HCT116 (cell line): ENCODE measurements at regions of chr14 and their contacts with region 1.

Region 1: GRCh38 chr14:80850197-80850814 is 91.2 kb downstream of the CEP128 start:
- DNase-seq: peak; percentile 21
- ATAC-seq: peak; percentile 58
- H3K4me3 ChIP-seq: no peak overlapping the region
- H3K27ac ChIP-seq: no peak overlapping the region
- H3K4me1 ChIP-seq: no peaks in the 10 kb centered on the region
- H3K27me3 ChIP-seq: no peaks in the 10 kb centered on the region
- CTCF ChIP-seq: peak; percentile 35 to 76 (median 39); a peak in 4 of 6 replicates
- POLR2A ChIP-seq: no peak
- RAD21 ChIP-seq: peak; percentile 69

Region 2: GRCh38 chr14:78933948-78934524 is 1916.3 kb before region 1 on chr14:
- CTCF ChIA-PET with region 1: no interaction called
- POLR2A ChIA-PET with region 1: no interaction called
- RAD21 ChIA-PET with region 1: no interaction called
- intact Hi-C with region 1: loop called (anchors 10 kb)
- DNase-seq: no peak
- ATAC-seq: no peak
- H3K4me3 ChIP-seq: no peak overlapping the region
- H3K27ac ChIP-seq: no peak overlapping the region
- H3K4me1 ChIP-seq: no peaks in the 10 kb centered on the region
- H3K27me3 ChIP-seq: no peaks in the 10 kb centered on the region
- CTCF ChIP-seq: peak; percentile 5 to 46 (median 6); a peak in 3 of 6 replicates
- POLR2A ChIP-seq: no peak
- RAD21 ChIP-seq: peak; percentile 39; the same call in 1 of the 2 replicates

Region 3: GRCh38 chr14:78959674-78960264 is 1890.5 kb before region 1 on chr14:
- CTCF ChIA-PET with region 1: no interaction called
- POLR2A ChIA-PET with region 1: no interaction called
- RAD21 ChIA-PET with region 1: no interaction called
- intact Hi-C with region 1: loop called (anchors 2 kb)
- DNase-seq: peak; percentile 26
- ATAC-seq: peak; percentile 74
- H3K4me3 ChIP-seq: no peak overlapping the region
- H3K27ac ChIP-seq: no peak overlapping the region
- H3K4me1 ChIP-seq: no peaks in the 10 kb centered on the region
- H3K27me3 ChIP-seq: no peaks in the 10 kb centered on the region
- CTCF ChIP-seq: peak; percentile 18 to 87 (median 75); a peak in 5 of 6 replicates
- POLR2A ChIP-seq: no peak
- RAD21 ChIP-seq: peak; percentile 55

Region 4: GRCh38 chr14:78968265-78968664 is 1882.0 kb before region 1 on chr14:
- CTCF ChIA-PET with region 1: no interaction called
- POLR2A ChIA-PET with region 1: no interaction called
- RAD21 ChIA-PET with region 1: no interaction called
- intact Hi-C with region 1: loop called (anchors 2 kb)
- DNase-seq: no peak
- ATAC-seq: no peak
- H3K4me3 ChIP-seq: no peak overlapping the region
- H3K27ac ChIP-seq: no peak overlapping the region
- H3K4me1 ChIP-seq: no peaks in the 10 kb centered on the region
- H3K27me3 ChIP-seq: no peaks in the 10 kb centered on the region
- CTCF ChIP-seq: no peak
- POLR2A ChIP-seq: no peak
- RAD21 ChIP-seq: no peak

Region 5: DNA sequence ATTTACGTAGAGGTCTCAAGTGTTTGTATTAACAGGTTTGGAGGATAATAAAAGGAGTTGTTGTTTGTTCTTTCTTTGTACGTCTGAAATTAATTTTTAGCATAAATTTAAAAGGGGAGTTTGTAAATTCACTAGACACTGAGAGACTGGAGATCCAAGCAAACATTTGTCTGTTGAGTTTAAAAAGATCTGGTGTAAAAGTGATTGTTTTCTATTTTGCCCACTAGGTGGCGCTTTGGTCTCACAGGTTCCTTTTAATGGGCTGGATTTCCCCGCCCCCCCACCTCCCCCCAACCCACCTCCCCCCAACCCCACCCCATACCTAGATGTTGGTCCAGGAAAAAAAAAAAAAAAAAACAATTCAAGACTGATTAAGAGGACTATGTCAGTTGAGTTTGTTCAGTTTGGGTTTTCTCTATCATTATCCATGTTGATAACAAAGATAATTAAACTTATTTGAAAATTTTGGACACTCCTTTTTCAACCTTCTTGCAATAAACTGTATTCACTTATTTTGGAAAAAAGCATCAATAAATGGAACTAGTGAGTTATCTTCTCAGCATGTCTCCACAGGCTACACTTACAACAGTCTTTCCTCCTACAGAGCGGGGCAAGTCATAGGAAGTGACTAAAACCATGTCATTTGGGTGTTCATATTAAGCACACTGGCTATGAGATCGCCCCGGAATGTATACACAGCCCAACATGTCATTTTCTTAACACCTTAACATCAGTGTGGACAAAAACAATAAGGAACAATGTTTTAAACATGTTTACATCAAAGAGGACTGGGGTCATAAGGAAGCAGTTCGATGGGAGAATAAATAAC is 1839.0 kb before region 1 on chr14:
- CTCF ChIA-PET with region 1: no interaction called
- POLR2A ChIA-PET with region 1: no interaction called
- RAD21 ChIA-PET with region 1: no interaction called
- intact Hi-C with region 1: loop called (anchors 5 kb)
- DNase-seq: no peak
- ATAC-seq: no peak
- H3K4me3 ChIP-seq: no peak overlapping the region
- H3K27ac ChIP-seq: no peak overlapping the region
- H3K4me1 ChIP-seq: no peaks in the 10 kb centered on the region
- H3K27me3 ChIP-seq: no peaks in the 10 kb centered on the region
- CTCF ChIP-seq: peak in 2 of 3 experiments; percentile 22 to 30; a peak in 2 of 6 replicates
- POLR2A ChIP-seq: no peak
- RAD21 ChIP-seq: peak; percentile 25; the same call in 1 of the 2 replicates

Region 6: DNA sequence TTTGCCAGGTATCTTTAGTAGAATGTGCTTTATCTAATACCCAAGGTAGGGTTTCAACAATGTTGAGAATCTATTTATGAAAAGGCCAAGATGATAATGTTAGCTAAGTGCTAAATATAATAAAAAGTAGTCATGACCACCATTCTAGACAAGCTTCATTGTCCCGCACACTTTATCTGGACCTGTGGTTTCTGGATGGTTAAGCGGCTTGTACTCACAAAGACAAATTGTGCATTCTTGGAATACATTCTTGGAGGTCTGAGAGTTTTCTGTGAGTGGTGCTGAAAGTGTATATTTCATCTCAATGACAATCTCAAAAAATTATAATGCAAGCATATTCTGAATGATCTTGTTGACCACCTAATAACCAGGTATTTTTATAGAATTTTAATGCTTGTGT is 1285.9 kb before region 1 on chr14:
- CTCF ChIA-PET with region 1: no interaction called
- POLR2A ChIA-PET with region 1: no interaction called
- RAD21 ChIA-PET with region 1: no interaction called
- intact Hi-C with region 1: no loop called
- DNase-seq: no peak
- ATAC-seq: no peak
- H3K4me3 ChIP-seq: no peak overlapping the region
- H3K27ac ChIP-seq: no peak overlapping the region
- H3K4me1 ChIP-seq: no peaks in the 10 kb centered on the region
- H3K27me3 ChIP-seq: no peaks in the 10 kb centered on the region
- CTCF ChIP-seq: no peak
- POLR2A ChIP-seq: no peak
- RAD21 ChIP-seq: no peak

Region 7: DNA sequence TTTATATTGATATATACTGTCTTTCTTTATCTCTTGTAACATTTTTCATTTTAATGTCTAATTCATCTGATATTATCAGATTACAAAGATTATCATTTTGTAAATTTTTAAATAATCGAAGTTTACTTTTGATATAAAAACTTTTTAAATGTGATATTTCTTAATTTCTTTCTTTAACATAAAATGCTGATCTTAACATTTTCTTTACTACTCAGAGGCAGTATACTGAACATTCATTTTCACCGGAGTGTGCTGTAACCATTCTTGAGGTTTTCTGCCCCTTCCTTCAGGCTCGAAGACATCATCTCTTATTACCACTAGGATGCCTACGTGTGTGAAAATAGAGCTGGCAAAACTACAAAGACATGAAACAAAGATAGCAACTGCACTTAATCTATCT is 825.9 kb before region 1 on chr14:
- CTCF ChIA-PET with region 1: no interaction called
- POLR2A ChIA-PET with region 1: no interaction called
- RAD21 ChIA-PET with region 1: no interaction called
- intact Hi-C with region 1: no loop called
- DNase-seq: no peak
- ATAC-seq: no peak
- H3K4me3 ChIP-seq: no peak overlapping the region
- H3K27ac ChIP-seq: no peak overlapping the region
- H3K4me1 ChIP-seq: no peaks in the 10 kb centered on the region
- H3K27me3 ChIP-seq: no peaks in the 10 kb centered on the region
- CTCF ChIP-seq: no peak
- POLR2A ChIP-seq: no peak
- RAD21 ChIP-seq: no peak

Region 8: DNA sequence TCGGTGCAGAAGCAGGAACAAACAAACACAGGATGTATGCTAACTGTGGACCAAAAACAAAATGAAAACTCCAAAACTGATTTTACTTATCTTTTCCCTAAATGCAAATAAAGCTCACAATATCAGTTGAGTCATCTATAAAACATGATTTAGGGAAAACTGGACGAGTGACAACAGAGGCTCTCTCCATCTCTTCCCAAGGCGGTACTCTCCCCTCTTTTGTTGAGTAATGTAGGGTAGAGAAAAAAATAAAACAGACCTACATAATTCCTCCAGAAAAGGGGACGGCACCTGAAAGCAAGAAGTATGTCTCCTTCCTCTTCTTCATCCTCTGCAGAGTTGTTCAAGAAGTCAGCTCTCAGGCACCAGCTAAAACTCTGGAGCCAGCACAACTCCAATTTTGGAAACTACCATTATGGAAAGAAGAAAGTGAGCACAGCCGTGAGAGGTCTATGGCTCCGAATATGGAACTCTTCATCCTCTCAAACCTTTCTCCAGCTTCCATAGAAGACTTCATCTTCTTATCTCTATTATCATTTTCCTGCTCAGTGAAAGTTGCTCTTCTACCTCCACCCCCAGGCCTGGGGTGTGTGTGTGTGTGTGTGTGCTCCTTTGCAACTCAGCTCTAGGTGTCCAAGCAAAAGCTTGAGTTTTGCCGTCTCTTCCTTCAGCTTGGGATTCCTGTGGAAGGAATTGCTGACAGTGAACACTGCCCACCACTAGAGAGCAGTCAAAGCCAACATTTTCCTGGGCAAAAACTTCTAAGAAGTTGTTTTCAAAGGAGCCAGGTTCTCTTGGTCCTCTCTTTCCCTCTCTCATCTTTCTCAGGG is 794.4 kb before region 1 on chr14:
- CTCF ChIA-PET with region 1: interaction called, 3 read pairs
- POLR2A ChIA-PET with region 1: no interaction called
- RAD21 ChIA-PET with region 1: no interaction called
- intact Hi-C with region 1: loop called (anchors 2 kb)
- DNase-seq: no peak
- ATAC-seq: peak; percentile 40; the same call in 1 of the 2 replicates
- H3K4me3 ChIP-seq: no peak overlapping the region
- H3K27ac ChIP-seq: no peak overlapping the region
- H3K4me1 ChIP-seq: no peaks in the 10 kb centered on the region
- H3K27me3 ChIP-seq: no peaks in the 10 kb centered on the region
- CTCF ChIP-seq: peak; percentile 18 to 50 (median 50); a peak in 4 of 6 replicates
- POLR2A ChIP-seq: no peak
- RAD21 ChIP-seq: peak; percentile 49

Region 9: GRCh38 chr14:80213599-80213998 is 636.7 kb before region 1 on chr14:
- CTCF ChIA-PET with region 1: interaction called, 3 read pairs
- POLR2A ChIA-PET with region 1: no interaction called
- RAD21 ChIA-PET with region 1: no interaction called
- intact Hi-C with region 1: loop called (anchors 1 kb)
- DNase-seq: peak; percentile 16
- ATAC-seq: peak; percentile 87
- H3K4me3 ChIP-seq: no peak overlapping the region
- H3K27ac ChIP-seq: no peak overlapping the region
- H3K4me1 ChIP-seq: no peaks in the 10 kb centered on the region
- H3K27me3 ChIP-seq: no peaks in the 10 kb centered on the region
- CTCF ChIP-seq: peak; percentile 30 to 75 (median 64); a peak in 5 of 6 replicates
- POLR2A ChIP-seq: no peak
- RAD21 ChIP-seq: peak; percentile 64

Region 10: GRCh38 chr14:80718940-80719339 is 131.4 kb before region 1 on chr14:
- CTCF ChIA-PET with region 1: no interaction called
- POLR2A ChIA-PET with region 1: no interaction called
- RAD21 ChIA-PET with region 1: no interaction called
- intact Hi-C with region 1: no loop called
- DNase-seq: no peak
- ATAC-seq: no peak
- H3K4me3 ChIP-seq: no peak overlapping the region
- H3K27ac ChIP-seq: no peak overlapping the region
- H3K4me1 ChIP-seq: no peaks in the 10 kb centered on the region
- H3K27me3 ChIP-seq: no peaks in the 10 kb centered on the region
- CTCF ChIP-seq: no peak
- POLR2A ChIP-seq: no peak
- RAD21 ChIP-seq: no peak